ENCODE measurements at regions of chr12 and their contacts with region 1.

Region 1: DNA sequence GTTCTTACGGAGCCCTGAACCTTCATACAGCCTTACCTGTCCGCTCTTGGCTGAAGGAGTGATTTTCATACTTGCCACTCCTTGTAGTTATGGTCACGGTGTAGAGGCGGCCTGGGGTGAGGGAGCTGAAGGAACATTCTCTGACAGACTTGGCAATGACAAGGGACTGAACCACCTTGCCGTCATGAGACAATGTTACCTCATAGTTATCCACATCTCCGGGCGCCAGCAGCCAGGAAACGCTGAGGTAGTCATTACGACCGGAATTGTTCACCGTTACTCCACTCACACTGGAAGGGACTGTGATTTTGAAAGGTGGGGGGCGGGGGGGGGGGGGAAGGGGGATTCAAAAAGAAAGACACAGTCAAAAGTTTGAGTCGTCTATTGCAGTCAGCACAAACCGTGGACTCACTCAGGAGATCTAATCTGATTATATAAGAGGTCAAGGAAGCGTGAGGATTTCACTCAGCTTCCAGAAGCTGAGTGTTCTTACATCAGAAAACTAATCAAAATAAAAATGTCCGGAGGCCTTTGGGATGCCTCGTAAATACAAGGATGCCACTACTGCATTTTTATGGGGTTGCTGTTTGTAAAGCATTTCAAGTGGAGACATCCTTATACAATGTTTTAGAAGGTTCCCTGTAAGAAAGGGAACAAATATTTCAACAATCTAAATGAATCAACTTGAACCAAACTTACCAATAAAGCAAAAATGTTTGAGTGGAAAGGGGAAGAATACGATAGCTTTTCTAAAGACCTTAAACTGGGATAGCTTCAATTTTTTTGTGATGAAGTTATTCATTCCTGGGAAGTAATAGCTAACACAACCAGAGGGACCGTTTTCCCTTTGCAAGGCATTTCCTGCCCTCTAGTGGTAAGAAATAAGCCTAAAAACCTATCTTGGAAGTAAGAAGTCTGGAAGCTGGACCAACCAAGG is 60.6 kb downstream of the PTPRB start:
- DNase-seq: no peak
- ATAC-seq: peak; percentile 78 to 80

Region 2: GRCh38 chr12:69879041-69879960 is 697.3 kb before region 1 on chr12:
- intact Hi-C with region 1: loop called (anchors 2 to 5 kb)
- DNase-seq: peak; percentile 71
- ATAC-seq: peak; percentile 94 to 96

Region 3: DNA sequence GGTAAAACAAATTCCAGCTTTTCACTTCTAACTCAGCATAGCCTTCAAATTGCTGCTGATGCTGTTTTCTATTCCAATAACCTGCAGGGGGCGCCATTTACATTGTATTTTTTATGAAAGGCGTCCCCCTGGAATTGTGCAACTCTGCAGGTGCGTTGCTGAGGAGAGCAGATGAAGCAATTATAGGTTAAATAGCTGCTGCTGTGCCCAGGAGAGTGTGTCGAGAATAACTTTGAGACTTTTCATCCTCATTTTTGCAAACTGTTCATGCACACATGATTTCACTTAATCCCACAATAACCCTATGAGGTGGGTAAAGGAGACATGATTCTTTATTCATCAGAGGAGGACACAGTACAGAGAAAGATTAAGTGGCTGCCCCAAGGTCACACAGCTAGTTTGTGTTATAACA is 675.9 kb before region 1 on chr12:
- intact Hi-C with region 1: loop called in 1 of 2 experiments (anchors 5 kb)
- DNase-seq: peak; percentile 81
- ATAC-seq: peak; percentile 34 to 58

Region 4: GRCh38 chr12:70365648-70366518 is 210.7 kb before region 1 on chr12 and contains the start of gene KCNMB4:
- intact Hi-C with region 1: loop called in 1 of 2 experiments (anchors 5 kb)
- DNase-seq: peak; percentile 69
- ATAC-seq: peak; percentile 91 to 96
- total RNA-seq, gene KCNMB4: 2.3 to 2.6 TPM

Region 5: DNA sequence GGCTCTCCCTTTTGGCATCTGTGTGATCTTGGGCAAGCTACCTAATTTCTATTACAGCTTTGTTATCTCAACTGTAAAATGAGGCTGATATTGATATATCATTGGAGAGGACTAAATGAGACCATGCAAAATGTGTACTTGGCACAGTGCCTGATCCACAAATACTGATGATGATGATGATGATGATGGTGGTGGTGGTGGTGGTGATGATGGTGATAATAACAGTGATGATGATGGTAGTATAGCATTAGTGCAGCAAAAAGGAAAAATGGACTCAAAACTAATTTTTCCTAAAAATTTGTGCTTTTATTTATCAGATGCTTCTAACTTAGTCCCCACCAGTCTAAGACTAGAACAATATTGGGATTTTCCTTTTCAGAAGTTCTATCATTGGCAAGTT is 139.8 kb before region 1 on chr12:
- intact Hi-C with region 1: no loop called
- DNase-seq: no peak
- ATAC-seq: no peak

Region 6: GRCh38 chr12:70598467-70599193 is 22.0 kb after region 1 on chr12:
- intact Hi-C with region 1: no loop called
- DNase-seq: peak; percentile 50
- ATAC-seq: no peak

Measured in left cardiac atrium (tissue), 4 donors.